ENCODE measurements at regions of chr2 and their contacts with region 1.

Region 1: DNA sequence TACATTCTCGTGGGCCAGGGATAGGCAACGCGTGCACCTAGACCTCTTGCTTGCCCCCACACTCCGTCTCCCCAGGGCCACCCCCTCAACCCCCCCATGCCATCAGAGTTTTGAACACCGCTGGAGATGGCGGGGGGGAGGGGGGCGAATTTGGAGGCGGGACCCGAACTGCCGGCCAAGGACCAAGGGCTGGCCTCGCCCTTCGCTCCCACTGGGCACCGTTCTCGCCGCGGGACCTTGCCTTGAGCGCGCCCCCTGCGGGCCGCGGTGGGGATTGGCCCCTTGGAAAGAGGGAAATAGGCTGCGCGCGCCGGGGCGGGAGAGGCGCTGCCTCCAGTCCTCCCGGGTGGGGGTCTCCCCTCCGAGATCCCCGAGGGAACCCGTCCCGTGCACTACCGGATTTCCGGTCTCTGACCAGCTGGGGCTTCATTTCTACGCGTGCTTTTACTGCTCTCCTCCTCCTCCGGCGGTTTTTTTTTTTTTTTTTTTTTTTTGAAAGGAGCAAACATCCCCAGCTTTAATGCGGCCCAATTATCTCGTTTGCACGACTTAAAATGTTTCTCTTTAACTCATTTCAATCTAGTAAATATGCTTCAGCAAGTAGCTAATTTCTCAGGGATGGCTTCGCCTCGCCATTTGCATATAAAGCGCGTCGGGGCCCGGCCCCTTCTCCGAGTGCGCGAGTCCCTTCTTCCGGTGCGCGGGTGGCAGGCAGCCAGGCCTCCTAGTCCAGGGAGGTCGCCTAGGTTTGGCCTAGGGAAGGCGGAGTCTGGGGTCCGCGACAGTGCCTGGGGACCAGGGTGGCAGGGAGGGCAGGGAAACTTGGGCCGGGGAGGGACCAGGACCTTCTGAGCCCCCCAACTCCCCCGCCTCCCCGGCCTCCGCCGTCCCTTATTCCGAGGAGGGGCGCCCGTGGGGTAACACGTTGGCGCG is 10.0 kb upstream of the GBX2 start:
- DNase-seq: peak; percentile 79
- CTCF ChIP-seq: peak; percentile 58

Region 2: DNA sequence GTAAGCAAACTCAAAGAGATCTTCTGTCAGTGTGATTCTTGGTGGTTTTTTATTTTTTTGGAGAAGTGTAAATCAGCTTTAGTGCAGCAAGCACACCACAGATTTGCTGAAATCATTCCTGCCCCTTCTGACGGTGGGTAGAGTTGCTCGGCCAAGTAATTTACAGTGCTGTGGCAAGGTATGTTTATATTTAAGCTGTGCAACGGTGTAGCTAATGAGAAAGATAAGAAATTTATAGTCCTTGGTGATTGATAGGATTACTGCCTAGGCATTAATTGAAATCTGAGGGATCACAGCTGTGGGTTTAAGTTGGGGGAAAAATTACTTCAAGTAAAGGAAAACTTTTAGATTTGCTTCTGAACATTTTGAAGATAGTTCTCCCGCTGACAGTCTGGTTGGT is 397.8 kb before region 1 on chr2:
- in situ Hi-C with region 1: loop called (anchors 10 kb)
- DNase-seq: no peak
- CTCF ChIP-seq: no peak

Region 3: GRCh38 chr2:235951982-235952381 is 226.3 kb before region 1 on chr2:
- in situ Hi-C with region 1: no loop called
- DNase-seq: no peak
- CTCF ChIP-seq: no peak